ENCODE measurements at regions of chr7 and their contacts with region 1.

Region 1: DNA sequence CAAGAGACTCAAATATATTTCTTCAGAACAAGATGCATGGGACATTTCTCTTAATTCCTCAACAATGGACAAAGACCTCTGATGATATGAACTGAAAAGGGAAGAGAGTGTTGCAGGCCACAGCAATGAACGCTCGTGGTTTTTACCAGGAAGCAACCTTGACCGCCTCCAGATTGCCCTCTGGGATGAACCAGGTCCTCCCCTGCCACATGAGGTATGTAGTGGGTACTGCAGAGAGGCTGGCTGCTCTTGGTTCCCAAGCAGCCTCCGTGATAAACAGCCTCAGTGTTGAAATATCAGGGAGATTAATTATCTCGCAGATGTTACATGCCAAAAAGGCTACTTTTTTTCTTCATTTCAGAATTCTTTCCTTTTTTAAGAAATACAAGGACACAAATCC is 338.8 kb downstream of the ELMO1 start:
- DNase-seq: no peak
- H3K4me3 ChIP-seq: no peak overlapping the region
- CTCF ChIP-seq: no peak
- POLR2A ChIP-seq: no peak

Region 2: GRCh38 chr7:37081436-37081835 is 28.4 kb before region 1 on chr7:
- intact Hi-C with region 1: loop called (anchors 2 kb)
- DNase-seq: no peak
- H3K4me3 ChIP-seq: no peak overlapping the region
- CTCF ChIP-seq: no peak
- POLR2A ChIP-seq: no peak